ENCODE measurements at regions of chrX and their contacts with region 1.

Region 1: GRCh38 chrX:68710870-68711576 is 63.6 kb downstream of the STARD8 start:
- DNase-seq: peak; percentile 29
- H3K4me3 Mint-ChIP-seq: no peak overlapping the region
- H3K27ac Mint-ChIP-seq: no peak overlapping the region
- H3K4me1 Mint-ChIP-seq: no peaks in the 10 kb centered on the region
- H3K27me3 Mint-ChIP-seq: no peaks in the 10 kb centered on the region

Region 2: GRCh38 chrX:68480969-68481368 is 230.1 kb before region 1 on chrX:
- CTCF ChIA-PET with region 1: no interaction called
- POLR2A ChIA-PET with region 1: no interaction called
- intact Hi-C with region 1: no loop called
- DNase-seq: no peak
- H3K4me3 Mint-ChIP-seq: no peak overlapping the region
- H3K27ac Mint-ChIP-seq: no peak overlapping the region
- H3K4me1 Mint-ChIP-seq: no peaks in the 10 kb centered on the region
- H3K27me3 Mint-ChIP-seq: no peaks in the 10 kb centered on the region

Region 3: GRCh38 chrX:68511255-68511654 is 199.8 kb before region 1 on chrX:
- CTCF ChIA-PET with region 1: interaction called, 14 read pairs
- POLR2A ChIA-PET with region 1: no interaction called
- intact Hi-C with region 1: loop called (anchors 1 kb)
- DNase-seq: no peak
- H3K4me3 Mint-ChIP-seq: no peak overlapping the region
- H3K27ac Mint-ChIP-seq: no peak overlapping the region
- H3K4me1 Mint-ChIP-seq: peaks cover 26% of the 10 kb centered on the region
- H3K27me3 Mint-ChIP-seq: no peaks in the 10 kb centered on the region

Measured in activated CD4-positive, alpha-beta memory T cell treated with anti-CD3 and anti-CD28 coated beads for 36 hours (primary cell).